Gastrocnemius medialis (tissue), 4 donors: ENCODE measurements at regions of chr19 and their contacts with region 1.

Region 1: DNA sequence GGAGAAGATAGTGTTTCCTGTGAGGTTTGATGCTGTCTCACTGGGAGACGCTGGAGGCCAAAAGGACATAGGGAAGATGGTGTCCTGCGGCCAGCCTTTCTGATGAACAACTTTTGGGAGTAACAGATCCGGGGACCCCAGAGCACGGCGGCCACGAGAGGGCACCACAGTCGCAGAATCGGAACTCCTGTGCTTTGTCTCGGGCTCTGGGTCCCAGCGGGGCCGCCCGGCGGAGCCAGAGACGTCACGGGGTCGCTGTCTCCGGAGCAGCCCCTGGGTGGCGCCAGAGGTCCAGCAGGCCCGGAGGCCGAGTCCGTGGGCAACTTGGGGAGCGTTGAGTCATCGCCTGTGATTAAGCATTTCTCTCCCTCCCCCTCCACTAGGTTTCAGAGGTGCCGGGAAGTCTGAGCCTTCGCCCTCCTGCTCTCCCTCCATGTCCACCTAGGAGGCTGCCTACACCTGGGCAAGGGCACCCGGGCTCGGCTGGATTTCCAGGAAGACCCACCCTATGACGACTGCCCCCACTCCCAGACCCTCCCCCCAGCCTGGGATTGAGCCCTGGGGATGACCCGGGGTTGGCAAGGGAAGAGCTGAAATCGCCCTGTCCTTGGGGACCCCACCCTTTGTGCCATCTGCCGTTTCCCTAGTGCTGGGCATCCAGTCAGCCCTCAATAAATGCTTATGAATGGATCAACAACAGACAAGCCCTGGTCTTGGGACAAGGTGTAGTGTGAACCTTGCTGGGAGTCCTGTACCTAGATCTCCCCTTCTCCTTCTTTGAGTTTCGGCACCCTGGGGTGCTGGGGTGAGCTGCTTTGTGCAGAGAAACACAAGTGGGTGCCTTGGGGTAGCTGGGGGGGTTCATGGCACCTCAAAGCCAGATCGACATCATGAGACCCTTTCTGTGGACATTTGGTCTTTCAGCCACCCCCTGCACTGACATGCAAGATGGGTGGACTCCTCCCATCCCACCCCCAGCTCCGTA is 3.4 kb downstream of the NANOS3 start:
- DNase-seq: peak; percentile 94 to 98
- ATAC-seq: peak; percentile 96 to 97
- H3K4me3 ChIP-seq: peak overlapping the region; percentile 33 to 49 (median 44)
- H3K27ac ChIP-seq: peak overlapping the region; percentile 77 to 92 (median 80)
- H3K4me1 ChIP-seq: peaks cover 13 to 17% of the 10 kb centered on the region in 2 donors
- H3K27me3 ChIP-seq: no peaks in the 10 kb centered on the region
- CTCF ChIP-seq: peak; percentile 98 to 100 (median 99)
- POLR2A ChIP-seq: no peak

Region 2: DNA sequence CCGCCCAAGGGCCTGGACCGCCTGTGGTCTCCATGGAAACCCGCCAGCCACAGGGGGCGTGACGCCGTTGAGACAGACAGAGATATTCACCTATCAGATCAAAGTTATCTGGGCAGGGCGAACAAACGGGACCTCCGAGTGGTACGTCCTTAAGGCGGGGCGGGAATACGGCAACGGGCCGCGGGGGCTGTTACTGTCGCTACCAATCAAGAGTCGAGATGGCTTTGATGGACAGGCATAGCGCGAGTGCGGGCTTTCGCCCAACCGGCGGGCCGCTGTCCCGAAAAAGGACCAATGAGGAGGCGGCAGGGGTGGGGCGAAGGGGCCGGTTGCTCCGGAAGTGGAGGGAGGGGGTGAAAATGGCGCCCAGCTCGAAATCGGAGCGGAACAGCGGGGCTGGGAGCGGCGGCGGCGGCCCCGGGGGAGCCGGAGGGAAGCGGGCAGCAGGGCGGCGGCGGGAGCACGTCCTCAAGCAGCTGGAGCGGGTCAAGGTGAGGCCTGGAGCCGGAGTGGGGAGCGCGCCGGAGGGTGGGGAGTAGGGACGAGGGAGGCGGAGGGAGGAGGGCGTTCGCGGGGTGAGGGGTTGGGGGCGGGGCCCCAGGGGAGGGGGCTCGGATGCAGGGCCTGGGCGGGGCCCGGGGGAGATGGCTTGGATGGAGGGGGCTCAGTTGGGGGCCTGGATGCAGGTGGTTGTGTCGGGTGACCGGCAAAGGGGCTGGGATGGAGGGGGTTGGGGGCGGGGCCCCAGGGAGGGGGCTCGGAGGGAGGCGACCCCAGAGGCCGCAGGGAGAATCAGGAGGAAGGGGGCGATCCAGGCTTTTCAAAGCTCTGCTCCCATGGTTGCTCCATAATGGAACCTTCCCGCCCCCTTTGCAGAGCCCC is 72.0 kb after region 1 on chr19 and contains the start of gene DCAF15:
- in situ Hi-C with region 1: no loop called
- intact Hi-C with region 1: loop called (anchors 2 kb)
- DNase-seq: peak; percentile 100
- ATAC-seq: peak; percentile 98 to 99
- H3K4me3 ChIP-seq: peak within 1 kb of the TSS; percentile 64 to 86 (median 80)
- H3K27ac ChIP-seq: peak within 1 kb of the TSS; percentile 87 to 90 (median 89)
- H3K4me1 ChIP-seq: peaks cover 18 to 26% of the 10 kb centered on the region in 2 donors
- H3K27me3 ChIP-seq: no peaks in the 10 kb centered on the region
- CTCF ChIP-seq: no peak
- POLR2A ChIP-seq: peak; percentile 44 to 53
- total RNA-seq, gene DCAF15: 11.2 to 38.8 (median 18.0) TPM

Region 3: GRCh38 chr19:14048443-14049153 is 168.2 kb after region 1 on chr19:
- in situ Hi-C with region 1: loop called in 3 of 4 experiments (anchors 10 kb)
- intact Hi-C with region 1: loop called (anchors 1 kb)
- DNase-seq: peak in 1 of 2 donors; percentile 46
- ATAC-seq: peak; percentile 54 to 88
- H3K4me3 ChIP-seq: no peak overlapping the region
- H3K27ac ChIP-seq: no peak overlapping the region
- H3K4me1 ChIP-seq: no peaks in the 10 kb centered on the region
- H3K27me3 ChIP-seq: no peaks in the 10 kb centered on the region
- CTCF ChIP-seq: peak; percentile 69 to 87 (median 74)
- POLR2A ChIP-seq: no peak

Region 4: GRCh38 chr19:14347999-14348889 is 467.9 kb after region 1 on chr19:
- in situ Hi-C with region 1: loop called (anchors 10 to 25 kb)
- intact Hi-C with region 1: loop called (anchors 1 kb)
- DNase-seq: peak; percentile 25 to 37
- ATAC-seq: peak in 1 of 2 donors; percentile 73
- H3K4me3 ChIP-seq: peak overlapping the region in 3 of 4 donors; percentile 27 to 39 (median 34)
- H3K27ac ChIP-seq: no peak overlapping the region
- H3K4me1 ChIP-seq: peaks cover 0 to 5% of the 10 kb centered on the region in 2 donors
- H3K27me3 ChIP-seq: peaks cover 0 to 4% (median 0%) of the 10 kb centered on the region in 3 donors
- CTCF ChIP-seq: peak; percentile 73 to 98 (median 91)
- POLR2A ChIP-seq: no peak